Right lobe of liver (tissue), 6 donors: ENCODE measurements at regions of chr10 and their contacts with region 1.

Region 1: DNA sequence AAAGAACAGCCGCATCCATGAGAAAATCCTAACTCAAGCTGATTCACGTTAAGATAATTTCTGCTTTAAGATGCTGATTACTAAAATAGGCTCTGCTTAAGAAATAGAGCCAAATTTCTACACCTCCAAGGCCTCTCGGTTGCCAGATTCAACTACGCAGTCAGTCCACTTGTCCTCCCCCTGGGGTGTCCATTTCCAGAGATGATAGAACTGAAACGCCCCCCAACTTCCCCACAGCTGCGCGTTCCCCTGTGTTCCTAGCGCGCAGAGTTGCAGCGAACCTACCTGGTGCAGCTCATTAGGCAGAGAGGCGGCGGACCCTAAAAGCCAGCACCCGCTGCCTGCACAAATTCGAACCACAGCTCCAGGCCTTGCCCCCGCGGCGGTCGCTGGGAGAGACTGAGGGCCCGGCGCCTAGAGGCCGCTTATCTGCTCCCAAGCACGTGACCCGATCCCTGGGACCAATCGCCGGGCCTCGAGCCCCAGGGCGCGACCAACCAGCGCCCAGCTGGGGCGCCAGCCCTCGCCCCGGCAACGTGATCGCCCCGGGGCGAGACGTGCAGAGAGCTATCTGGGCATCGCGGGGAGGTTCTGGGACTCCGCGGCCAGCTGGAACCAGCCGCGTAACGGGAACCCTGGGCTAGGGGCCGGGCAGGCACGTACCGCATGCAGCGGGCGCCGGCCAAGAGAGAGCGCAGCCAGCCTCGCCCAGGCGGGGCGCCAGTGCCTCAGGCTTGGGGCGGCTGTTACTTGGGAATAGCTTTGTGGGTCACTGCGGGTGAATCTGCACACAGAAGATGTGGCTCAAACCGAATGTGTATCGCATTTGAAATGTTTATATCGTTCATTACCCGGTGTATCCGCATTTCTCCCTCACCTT is at the start of gene PPP1R3C:
- DNase-seq: peak; percentile 94 to 97 (median 97)
- ATAC-seq: peak; percentile 78 to 93 (median 86)
- H3K4me3 ChIP-seq: peak within 1 kb of the TSS; percentile 61 to 80 (median 78)
- H3K27ac ChIP-seq: peak within 1 kb of the TSS; percentile 81 to 83 (median 82)
- H3K4me1 ChIP-seq: peaks cover 0 to 43% (median 6%) of the 10 kb centered on the region in 4 donors
- H3K27me3 ChIP-seq: no peaks in the 10 kb centered on the region
- CTCF ChIP-seq: peak; percentile 23 to 40 (median 34)
- POLR2A ChIP-seq: peak; percentile 98
- total RNA-seq, gene PPP1R3C: 24.7 to 158 (median 51.3) TPM

Region 2: DNA sequence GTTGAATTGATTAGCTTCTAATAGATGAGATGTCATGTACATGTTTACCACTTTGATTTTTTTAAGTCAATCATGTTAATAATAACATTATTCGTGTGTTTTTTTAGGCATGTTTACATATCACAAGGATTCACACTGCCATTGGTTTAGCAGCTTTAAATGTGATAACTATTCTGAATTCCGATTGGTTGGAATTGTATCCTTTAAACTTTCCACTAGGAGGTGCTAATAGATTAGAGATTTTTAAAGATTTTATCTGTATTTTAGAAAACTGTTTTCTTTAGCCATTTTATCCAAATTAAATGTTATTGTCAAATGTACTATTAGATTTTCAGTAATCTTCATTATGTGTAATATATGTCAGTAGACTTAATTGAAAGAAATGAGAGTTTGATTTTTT is 139.6 kb before region 1 on chr10:
- intact Hi-C with region 1: loop called in 1 of 2 experiments (anchors 10 kb)
- DNase-seq: no peak
- ATAC-seq: peak; percentile 44 to 74 (median 71)
- H3K4me3 ChIP-seq: no peak overlapping the region
- H3K27ac ChIP-seq: no peak overlapping the region
- H3K4me1 ChIP-seq: no peaks in the 10 kb centered on the region
- H3K27me3 ChIP-seq: no peaks in the 10 kb centered on the region
- CTCF ChIP-seq: peak; percentile 49 to 60 (median 58)
- POLR2A ChIP-seq: no peak

Region 3: GRCh38 chr10:91556691-91557566 is 76.0 kb before region 1 on chr10:
- intact Hi-C with region 1: loop called (anchors 5 to 10 kb)
- DNase-seq: peak in 1 of 3 donors; percentile 79
- ATAC-seq: peak; percentile 73 to 82 (median 77)
- H3K4me3 ChIP-seq: no peak overlapping the region
- H3K27ac ChIP-seq: peak overlapping the region; percentile 57 to 79 (median 63)
- H3K4me1 ChIP-seq: peaks cover 0 to 63% (median 27%) of the 10 kb centered on the region in 4 donors
- H3K27me3 ChIP-seq: no peaks in the 10 kb centered on the region
- CTCF ChIP-seq: no peak
- POLR2A ChIP-seq: no peak

Region 4: DNA sequence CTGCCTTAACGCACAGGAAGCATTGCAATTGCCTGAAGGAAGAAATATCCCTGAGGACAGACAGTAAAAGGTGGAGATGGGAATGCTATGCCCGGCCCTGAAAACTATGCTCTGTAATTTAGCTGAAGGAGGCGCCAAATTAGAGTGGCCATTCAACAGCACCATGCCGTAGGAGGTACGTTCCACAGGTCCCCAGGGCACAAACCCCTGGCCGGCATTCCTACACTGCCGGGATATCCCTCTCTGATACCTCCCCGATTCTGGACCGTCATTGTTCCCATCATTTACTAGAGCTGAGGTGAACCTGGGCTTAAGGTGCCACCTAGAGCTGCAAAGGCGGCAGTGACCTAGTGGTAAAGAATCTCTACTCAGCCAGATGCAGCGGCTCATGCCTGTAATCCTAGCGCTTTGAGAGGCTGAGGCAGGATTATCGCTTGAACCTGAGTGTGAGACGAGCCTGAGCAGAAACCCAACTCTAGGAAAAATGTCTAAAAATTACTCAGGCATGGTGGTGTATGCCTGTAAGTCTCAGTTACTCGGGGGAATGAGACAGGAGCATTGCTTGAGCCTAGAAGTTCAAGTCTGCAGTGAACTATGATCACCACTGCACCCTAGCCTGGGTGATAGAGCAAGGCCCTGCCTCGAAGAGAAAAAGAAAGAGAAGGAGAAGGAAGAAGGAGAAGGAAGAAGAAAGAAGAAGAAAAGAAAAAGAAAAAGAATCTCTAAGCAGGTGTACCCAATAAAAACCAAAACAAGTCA is 112.3 kb after region 1 on chr10:
- intact Hi-C with region 1: loop called (anchors 10 kb)
- DNase-seq: peak; percentile 55 to 74 (median 63)
- ATAC-seq: peak; percentile 92 to 99 (median 94)
- H3K4me3 ChIP-seq: peak overlapping the region in 2 of 3 donors; percentile 31 to 45
- H3K27ac ChIP-seq: peak overlapping the region in 1 of 3 donors; percentile 19
- H3K4me1 ChIP-seq: peaks cover 0 to 32% (median 8%) of the 10 kb centered on the region in 4 donors
- H3K27me3 ChIP-seq: no peaks in the 10 kb centered on the region
- CTCF ChIP-seq: peak; percentile 55 to 75 (median 70)
- POLR2A ChIP-seq: no peak

Region 5: DNA sequence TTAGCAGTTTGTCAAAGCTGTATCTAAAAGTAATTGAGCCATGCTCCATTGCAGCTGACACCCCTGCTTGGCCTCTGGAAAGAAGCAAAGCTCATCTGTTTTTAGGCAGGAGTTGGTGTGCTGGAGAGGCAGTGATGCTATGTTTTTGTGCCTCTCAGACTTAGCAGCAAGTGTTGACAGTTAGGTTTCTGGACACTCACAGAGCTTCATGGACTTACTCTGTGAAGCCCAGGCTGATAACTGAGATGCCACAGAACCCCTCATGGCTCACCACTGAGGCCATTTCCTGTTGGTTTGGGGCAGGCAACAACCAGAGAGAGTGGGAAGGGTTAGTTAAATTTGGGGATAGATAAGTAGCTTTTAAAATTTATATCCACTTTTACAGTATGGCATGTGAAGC is 350.5 kb after region 1 on chr10:
- intact Hi-C with region 1: no loop called
- DNase-seq: no peak
- ATAC-seq: no peak
- H3K4me3 ChIP-seq: no peak overlapping the region
- H3K27ac ChIP-seq: no peak overlapping the region
- H3K4me1 ChIP-seq: no peaks in the 10 kb centered on the region
- H3K27me3 ChIP-seq: no peaks in the 10 kb centered on the region
- CTCF ChIP-seq: no peak
- POLR2A ChIP-seq: no peak